ENCODE measurements at regions of chr7 and their contacts with region 1.

Region 1: GRCh38 chr7:148872188-148872587 is 11.9 kb downstream of the EZH2 start:
- DNase-seq: no peak
- H3K4me3 Mint-ChIP-seq: no peak overlapping the region
- H3K27ac Mint-ChIP-seq: no peak overlapping the region
- H3K4me1 Mint-ChIP-seq: peaks cover 53% of the 10 kb centered on the region
- H3K27me3 Mint-ChIP-seq: no peaks in the 10 kb centered on the region

Region 2: DNA sequence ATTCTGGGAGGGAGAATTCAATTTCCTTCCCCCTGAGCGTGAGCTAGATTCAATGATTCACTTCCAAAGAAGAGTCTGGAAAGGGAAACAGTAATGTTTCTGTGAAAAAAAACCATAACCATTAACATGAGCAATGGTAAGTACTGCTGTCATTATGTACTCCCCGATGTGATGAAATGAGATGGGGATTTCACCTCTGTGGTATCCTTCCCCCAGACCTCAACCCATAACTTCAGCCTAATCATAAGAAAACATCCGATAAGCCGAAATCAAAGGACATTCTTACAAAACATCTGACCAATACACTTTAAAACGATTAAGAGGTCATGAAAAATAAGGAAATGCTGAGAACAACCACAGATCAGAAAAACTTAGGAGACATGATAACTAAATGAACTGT is 15.3 kb before region 1 on chr7:
- CTCF ChIA-PET with region 1: interaction called, 10 read pairs
- POLR2A ChIA-PET with region 1: interaction called, 4 read pairs
- DNase-seq: peak; percentile 23
- H3K4me3 Mint-ChIP-seq: no peak overlapping the region
- H3K27ac Mint-ChIP-seq: peak overlapping the region; percentile 56
- H3K4me1 Mint-ChIP-seq: peaks cover 46% of the 10 kb centered on the region
- H3K27me3 Mint-ChIP-seq: no peaks in the 10 kb centered on the region